B cell (primary cell): ENCODE measurements at regions of chr14 and their contacts with region 1.

Region 1: DNA sequence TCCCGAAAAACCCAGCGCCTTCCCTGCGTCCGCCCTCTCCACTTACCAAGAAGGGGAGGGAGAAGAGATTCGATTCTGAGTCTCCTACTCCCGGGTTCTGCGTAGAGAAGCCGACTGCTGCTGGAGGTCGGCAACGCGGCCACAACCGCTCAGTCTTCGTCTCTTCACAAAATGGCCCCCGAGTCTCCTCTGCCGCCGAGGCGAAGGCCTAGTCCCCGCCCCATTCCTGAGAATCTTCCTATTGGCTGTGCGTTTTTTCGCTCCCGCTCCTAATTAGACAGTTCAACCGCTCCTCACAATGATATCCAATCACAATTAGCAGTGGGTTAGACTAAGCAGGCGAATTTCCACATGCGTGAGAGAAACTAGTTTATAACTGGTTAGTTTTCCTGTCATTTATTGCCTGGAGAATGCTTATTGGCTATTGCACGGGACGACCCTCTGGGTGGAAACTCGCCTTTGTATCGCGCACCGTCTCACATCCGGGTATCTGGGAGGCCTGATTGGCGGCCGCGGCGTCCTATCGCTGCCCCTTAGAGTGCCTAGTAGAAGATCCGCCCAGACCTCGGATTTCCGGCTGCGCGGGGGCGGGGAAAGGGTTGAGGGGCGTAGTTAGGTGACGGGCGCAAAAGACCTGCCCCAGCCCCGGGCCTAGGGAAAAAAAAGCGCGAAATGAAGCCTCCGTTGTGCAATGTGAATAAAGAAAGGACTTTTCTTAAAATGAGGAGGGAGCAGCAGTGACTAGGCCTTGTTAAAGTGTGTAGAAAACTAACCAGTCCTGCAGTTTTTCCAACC is at the start of gene HNRNPC:
- DNase-seq: peak; percentile 100
- ATAC-seq: peak; percentile 83
- H3K4me3 ChIP-seq: peak within 1 kb of the TSS; percentile 67 to 100 (median 99)
- H3K4me3 Mint-ChIP-seq: peak within 1 kb of the TSS; percentile 98
- H3K27ac ChIP-seq: peak within 1 kb of the TSS; percentile 91 to 92
- H3K27ac Mint-ChIP-seq: peak within 1 kb of the TSS; percentile 99
- H3K4me1 ChIP-seq: peaks cover 37 to 48% of the 10 kb centered on the region in 2 donors
- H3K4me1 Mint-ChIP-seq: peaks cover 40% of the 10 kb centered on the region
- H3K27me3 ChIP-seq: no peaks in the 10 kb centered on the region
- H3K27me3 Mint-ChIP-seq: no peaks in the 10 kb centered on the region
- CTCF ChIP-seq: no peak
- total RNA-seq, gene HNRNPC: 496 and 497 TPM in 2 replicates

Region 2: DNA sequence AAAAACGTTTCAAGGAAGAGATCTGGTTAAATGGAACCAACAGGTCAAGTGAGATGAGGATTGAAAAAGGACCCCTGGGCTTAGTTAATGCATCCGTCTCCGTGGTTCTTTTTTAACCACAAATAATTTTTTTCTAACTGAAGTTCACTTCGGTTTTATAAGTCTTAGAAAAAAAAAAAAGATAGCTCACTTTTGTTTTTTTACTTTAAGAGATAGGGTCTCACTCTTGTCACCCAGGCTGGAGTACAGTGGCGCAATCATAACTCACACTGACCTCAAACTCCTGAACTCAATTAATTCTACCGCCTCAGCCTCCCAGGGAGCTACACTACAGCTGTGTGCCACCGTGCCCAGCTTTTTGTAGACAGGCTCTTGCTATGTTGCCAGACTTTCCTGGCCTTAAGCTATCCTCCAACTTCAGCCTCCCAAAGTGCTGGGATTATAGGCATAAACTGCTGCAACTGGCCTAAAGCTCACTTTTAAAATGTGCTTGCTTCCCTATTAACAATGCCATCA is 12.0 kb before region 1 on chr14:
- CTCF ChIA-PET with region 1: no interaction called
- POLR2A ChIA-PET with region 1: no interaction called
- intact Hi-C with region 1: no loop called
- DNase-seq: no peak
- ATAC-seq: no peak
- H3K4me3 ChIP-seq: no peak overlapping the region
- H3K4me3 Mint-ChIP-seq: peak overlapping the region; percentile 51
- H3K27ac ChIP-seq: peak overlapping the region in 1 of 2 donors; percentile 44
- H3K27ac Mint-ChIP-seq: peak overlapping the region; percentile 62
- H3K4me1 ChIP-seq: peaks cover 25 to 32% of the 10 kb centered on the region in 2 donors
- H3K4me1 Mint-ChIP-seq: peaks cover 60% of the 10 kb centered on the region
- H3K27me3 ChIP-seq: no peaks in the 10 kb centered on the region
- H3K27me3 Mint-ChIP-seq: no peaks in the 10 kb centered on the region
- CTCF ChIP-seq: no peak

Region 3: DNA sequence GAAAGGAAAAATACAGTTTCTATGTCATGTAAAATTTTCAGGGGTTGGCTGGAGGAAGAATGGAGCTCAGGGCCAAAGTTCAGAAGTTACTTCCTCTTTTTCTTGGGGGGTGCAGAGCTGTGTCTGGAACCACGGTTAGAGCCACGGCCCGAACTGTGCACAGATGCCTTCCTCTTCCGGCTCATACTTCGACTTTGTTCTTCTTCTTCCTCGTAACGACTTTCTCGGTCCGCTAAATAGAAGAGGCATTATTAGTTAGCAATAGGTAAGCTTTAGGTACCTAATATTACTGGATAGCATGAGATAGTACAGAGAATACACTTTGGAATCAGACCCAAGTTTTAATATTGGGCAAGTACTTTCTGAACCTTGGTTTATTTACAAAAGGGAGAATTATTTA is 83.1 kb after region 1 on chr14:
- CTCF ChIA-PET with region 1: interaction called, 3 read pairs
- POLR2A ChIA-PET with region 1: no interaction called
- intact Hi-C with region 1: loop called (anchors 1 kb)
- DNase-seq: peak; percentile 81
- ATAC-seq: peak; percentile 97
- H3K4me3 ChIP-seq: no peak overlapping the region
- H3K4me3 Mint-ChIP-seq: peak overlapping the region; percentile 38
- H3K27ac ChIP-seq: peak overlapping the region; percentile 62 to 73
- H3K27ac Mint-ChIP-seq: peak overlapping the region; percentile 83
- H3K4me1 ChIP-seq: peaks cover 10 to 11% of the 10 kb centered on the region in 2 donors
- H3K4me1 Mint-ChIP-seq: peaks cover 17% of the 10 kb centered on the region
- H3K27me3 ChIP-seq: no peaks in the 10 kb centered on the region
- H3K27me3 Mint-ChIP-seq: no peaks in the 10 kb centered on the region
- CTCF ChIP-seq: no peak